RWPE1 (cell line): ENCODE measurements at regions of chr4 and their contacts with region 1.

Region 1: DNA sequence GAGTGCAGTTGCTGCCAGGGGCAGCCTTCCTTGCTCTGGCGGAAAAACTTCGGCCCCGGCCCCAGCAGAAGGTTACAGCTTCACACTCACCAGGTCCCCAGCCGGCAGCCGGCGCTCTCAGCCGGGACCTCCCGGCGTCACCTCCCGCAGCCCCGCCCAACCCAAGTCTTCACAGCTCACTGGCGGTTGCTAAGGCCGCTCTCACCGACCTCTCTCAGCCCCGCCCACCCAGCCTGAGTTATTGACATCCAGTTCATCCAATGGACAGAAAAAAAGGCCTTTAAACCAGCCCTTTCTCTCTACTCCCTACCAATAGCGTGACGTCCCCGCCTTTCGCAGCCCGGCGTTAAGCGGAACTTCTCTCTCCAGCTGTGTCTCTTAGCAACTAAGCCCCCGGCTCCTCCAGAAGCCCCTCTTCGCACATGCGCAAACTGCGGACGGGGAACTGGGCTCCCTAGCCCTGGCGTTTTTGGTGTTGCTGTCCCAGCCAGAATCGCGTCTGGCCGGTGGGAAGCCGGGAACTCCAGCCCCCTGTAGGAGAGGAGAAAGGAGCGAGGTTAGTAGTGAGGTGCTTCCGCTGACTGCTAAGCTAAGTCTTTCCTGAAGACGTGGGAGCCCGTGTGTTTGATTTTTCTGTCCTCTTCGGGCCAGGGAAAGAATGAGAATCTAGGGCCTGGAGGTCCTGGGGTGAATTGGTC is at the start of gene BBS12:
- DNase-seq: peak; percentile 100
- H3K27ac ChIP-seq: peak within 1 kb of the TSS; percentile 89
- CTCF ChIP-seq: peak; percentile 42; the same call in 1 of the 2 replicates

Region 2: GRCh38 chr4:122479935-122480416 is 252.5 kb before region 1 on chr4:
- CTCF ChIA-PET with region 1: no interaction called
- POLR2A ChIA-PET with region 1: no interaction called
- DNase-seq: no peak
- H3K27ac ChIP-seq: no peak overlapping the region
- CTCF ChIP-seq: no peak

Region 3: GRCh38 chr4:122716825-122717448 is 15.5 kb before region 1 on chr4:
- CTCF ChIA-PET with region 1: interaction called, 10 read pairs
- POLR2A ChIA-PET with region 1: no interaction called
- DNase-seq: peak; percentile 84
- H3K27ac ChIP-seq: no peak overlapping the region
- CTCF ChIP-seq: peak; percentile 93

Region 4: GRCh38 chr4:122765702-122766352 is 33.3 kb after region 1 on chr4:
- CTCF ChIA-PET with region 1: interaction called, 11 read pairs
- POLR2A ChIA-PET with region 1: no interaction called
- DNase-seq: no peak
- H3K27ac ChIP-seq: peak overlapping the region; percentile 77
- CTCF ChIP-seq: no peak